Activated B cell treated with CpG ODN at 0.5 μM for 24 hours (primary cell): ENCODE measurements at regions of chr3 and their contacts with region 1.

Region 1: GRCh38 chr3:15332405-15333098 is at the start of gene SH3BP5:
- DNase-seq: peak; percentile 80
- ATAC-seq: peak; percentile 84
- H3K4me3 Mint-ChIP-seq: peak within 1 kb of the TSS; percentile 95
- H3K27ac Mint-ChIP-seq: peak within 1 kb of the TSS; percentile 96
- H3K4me1 Mint-ChIP-seq: peaks cover 62% of the 10 kb centered on the region
- H3K27me3 Mint-ChIP-seq: no peaks in the 10 kb centered on the region
- CTCF ChIP-seq: no peak
- total RNA-seq, gene SH3BP5: 60.5 and 66.0 TPM in 2 replicates

Region 2: GRCh38 chr3:14532691-14533456 is 799.7 kb before region 1 on chr3:
- CTCF ChIA-PET with region 1: no interaction called
- POLR2A ChIA-PET with region 1: no interaction called
- intact Hi-C with region 1: no loop called
- DNase-seq: no peak
- ATAC-seq: no peak
- H3K4me3 Mint-ChIP-seq: no peak overlapping the region
- H3K27ac Mint-ChIP-seq: no peak overlapping the region
- H3K4me1 Mint-ChIP-seq: no peaks in the 10 kb centered on the region
- H3K27me3 Mint-ChIP-seq: peaks cover 5% of the 10 kb centered on the region
- CTCF ChIP-seq: no peak

Region 3: DNA sequence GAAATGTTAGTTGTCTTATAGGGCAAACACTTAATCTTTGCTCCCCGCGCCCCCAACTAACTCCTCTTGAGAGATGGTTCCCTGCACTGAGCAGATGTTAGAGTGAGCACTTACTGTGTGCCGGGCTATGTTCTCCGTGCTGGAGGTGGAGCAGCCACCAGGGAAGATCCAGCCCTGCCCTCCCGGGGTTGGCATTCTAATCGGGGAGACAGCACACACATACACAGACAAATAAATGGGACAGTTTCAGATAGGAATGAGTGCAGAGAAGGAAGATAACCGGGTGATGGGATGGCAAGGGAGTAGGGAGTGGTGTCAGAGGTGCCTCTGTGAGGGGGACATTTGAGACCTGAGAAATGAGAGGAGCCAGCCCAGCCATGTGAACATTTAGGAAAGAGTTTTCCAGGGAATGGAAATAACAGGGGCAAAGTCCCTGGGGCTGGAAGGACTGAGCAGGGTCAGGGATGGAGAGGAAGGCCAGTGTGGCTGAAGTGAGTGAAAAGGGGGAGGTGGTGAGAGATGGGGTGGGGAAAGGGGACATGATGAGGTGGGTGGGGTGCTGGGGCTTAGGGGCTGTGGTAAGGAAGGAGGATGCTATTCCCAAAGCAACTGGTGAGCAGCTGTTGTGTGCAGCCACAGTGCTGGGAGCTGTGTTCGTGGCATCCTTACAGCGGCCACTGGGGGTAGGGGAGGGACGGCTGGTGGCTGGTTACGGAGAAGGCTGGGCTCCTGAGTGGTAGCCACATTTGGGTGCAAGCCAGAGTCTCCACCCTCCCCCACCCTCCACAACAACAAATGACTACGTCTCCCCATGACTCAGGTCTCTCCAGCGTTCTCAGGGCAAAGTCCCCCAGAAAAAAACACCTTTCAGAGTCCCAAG is 529.2 kb before region 1 on chr3:
- CTCF ChIA-PET with region 1: no interaction called
- POLR2A ChIA-PET with region 1: no interaction called
- intact Hi-C with region 1: no loop called
- DNase-seq: no peak
- ATAC-seq: no peak
- H3K4me3 Mint-ChIP-seq: no peak overlapping the region
- H3K27ac Mint-ChIP-seq: no peak overlapping the region
- H3K4me1 Mint-ChIP-seq: no peaks in the 10 kb centered on the region
- H3K27me3 Mint-ChIP-seq: peaks cover 37% of the 10 kb centered on the region
- CTCF ChIP-seq: no peak

Region 4: GRCh38 chr3:15309662-15310335 is 22.8 kb before region 1 on chr3:
- CTCF ChIA-PET with region 1: no interaction called
- POLR2A ChIA-PET with region 1: interaction called, 7 read pairs
- intact Hi-C with region 1: loop called (anchors 1 kb)
- DNase-seq: no peak
- ATAC-seq: no peak
- H3K4me3 Mint-ChIP-seq: peak overlapping the region; percentile 35
- H3K27ac Mint-ChIP-seq: peak overlapping the region; percentile 83
- H3K4me1 Mint-ChIP-seq: peaks cover 86% of the 10 kb centered on the region
- H3K27me3 Mint-ChIP-seq: no peaks in the 10 kb centered on the region
- CTCF ChIP-seq: no peak

Region 5: GRCh38 chr3:15345608-15346137 is 13.1 kb after region 1 on chr3:
- CTCF ChIA-PET with region 1: interaction called, 19 read pairs
- POLR2A ChIA-PET with region 1: interaction called, 46 read pairs
- intact Hi-C with region 1: loop called (anchors 1 kb)
- DNase-seq: peak; percentile 53
- ATAC-seq: peak; percentile 90
- H3K4me3 Mint-ChIP-seq: peak overlapping the region; percentile 59
- H3K27ac Mint-ChIP-seq: peak overlapping the region; percentile 98
- H3K4me1 Mint-ChIP-seq: peaks cover 84% of the 10 kb centered on the region
- H3K27me3 Mint-ChIP-seq: no peaks in the 10 kb centered on the region
- CTCF ChIP-seq: no peak

Region 6: DNA sequence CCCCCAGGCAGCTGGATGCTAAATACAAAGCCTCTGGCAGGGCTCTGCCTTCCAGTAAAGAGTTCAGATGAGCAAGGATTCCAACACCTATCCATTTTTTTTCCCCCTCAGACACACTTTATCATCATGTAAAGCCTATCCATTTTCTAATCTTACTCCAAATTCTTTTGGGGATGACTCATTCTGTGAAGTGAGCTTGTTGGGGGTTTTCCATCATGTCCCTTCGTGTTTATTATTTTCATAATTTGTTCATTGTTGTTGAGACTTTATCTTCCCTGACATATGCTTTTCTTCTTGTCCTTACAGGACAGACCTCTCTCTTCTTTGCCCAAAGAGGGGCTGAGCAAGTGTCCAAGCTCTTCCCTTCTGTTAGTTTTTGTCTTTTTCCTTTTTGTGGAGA is 34.5 kb after region 1 on chr3:
- CTCF ChIA-PET with region 1: interaction called, 23 read pairs
- POLR2A ChIA-PET with region 1: interaction called, 20 read pairs
- intact Hi-C with region 1: no loop called
- DNase-seq: no peak
- ATAC-seq: no peak
- H3K4me3 Mint-ChIP-seq: no peak overlapping the region
- H3K27ac Mint-ChIP-seq: peak overlapping the region; percentile 57
- H3K4me1 Mint-ChIP-seq: peaks cover 53% of the 10 kb centered on the region
- H3K27me3 Mint-ChIP-seq: no peaks in the 10 kb centered on the region
- CTCF ChIP-seq: no peak

Region 7: GRCh38 chr3:15384510-15385237 is 52.1 kb after region 1 on chr3:
- CTCF ChIA-PET with region 1: interaction called, 7 read pairs
- POLR2A ChIA-PET with region 1: interaction called, 17 read pairs
- intact Hi-C with region 1: loop called (anchors 1 kb)
- DNase-seq: no peak
- ATAC-seq: peak; percentile 90
- H3K4me3 Mint-ChIP-seq: peak overlapping the region; percentile 71
- H3K27ac Mint-ChIP-seq: peak overlapping the region; percentile 95
- H3K4me1 Mint-ChIP-seq: peaks cover 79% of the 10 kb centered on the region
- H3K27me3 Mint-ChIP-seq: no peaks in the 10 kb centered on the region
- CTCF ChIP-seq: no peak

Region 8: DNA sequence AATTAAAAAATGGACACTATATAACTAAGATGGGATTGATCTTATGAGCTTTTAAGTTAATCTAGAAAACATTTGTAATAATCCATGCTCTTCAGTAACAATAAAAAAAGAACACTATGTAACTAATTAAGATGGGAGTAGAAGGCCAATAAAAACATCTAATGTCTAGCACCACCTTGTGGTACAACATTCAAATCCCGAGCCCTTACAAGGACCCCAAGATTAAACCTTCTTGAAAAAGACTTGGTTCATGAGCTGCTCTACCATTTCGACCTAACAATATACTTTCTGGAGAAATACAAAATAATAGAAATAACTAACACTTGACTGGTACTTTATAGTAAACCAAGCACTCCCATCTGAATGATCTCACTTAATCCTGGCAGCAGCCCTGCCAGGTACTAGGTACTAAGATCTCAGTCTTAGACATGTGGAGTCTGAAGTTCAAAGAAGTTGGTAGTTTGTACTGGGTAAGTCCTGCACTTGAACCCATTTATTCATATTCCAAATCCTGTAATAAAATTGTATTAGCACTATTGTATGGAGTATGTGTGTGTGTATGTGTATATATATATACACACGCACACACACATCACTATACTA is 73.0 kb after region 1 on chr3:
- CTCF ChIA-PET with region 1: interaction called, 11 read pairs
- POLR2A ChIA-PET with region 1: interaction called, 4 read pairs
- intact Hi-C with region 1: no loop called
- DNase-seq: no peak
- ATAC-seq: peak; percentile 73
- H3K4me3 Mint-ChIP-seq: no peak overlapping the region
- H3K27ac Mint-ChIP-seq: no peak overlapping the region
- H3K4me1 Mint-ChIP-seq: peaks cover 24% of the 10 kb centered on the region
- H3K27me3 Mint-ChIP-seq: no peaks in the 10 kb centered on the region
- CTCF ChIP-seq: peak; percentile 27